A549 (cell line): ENCODE measurements at regions of chr1 and their contacts with region 1.

Region 1: DNA sequence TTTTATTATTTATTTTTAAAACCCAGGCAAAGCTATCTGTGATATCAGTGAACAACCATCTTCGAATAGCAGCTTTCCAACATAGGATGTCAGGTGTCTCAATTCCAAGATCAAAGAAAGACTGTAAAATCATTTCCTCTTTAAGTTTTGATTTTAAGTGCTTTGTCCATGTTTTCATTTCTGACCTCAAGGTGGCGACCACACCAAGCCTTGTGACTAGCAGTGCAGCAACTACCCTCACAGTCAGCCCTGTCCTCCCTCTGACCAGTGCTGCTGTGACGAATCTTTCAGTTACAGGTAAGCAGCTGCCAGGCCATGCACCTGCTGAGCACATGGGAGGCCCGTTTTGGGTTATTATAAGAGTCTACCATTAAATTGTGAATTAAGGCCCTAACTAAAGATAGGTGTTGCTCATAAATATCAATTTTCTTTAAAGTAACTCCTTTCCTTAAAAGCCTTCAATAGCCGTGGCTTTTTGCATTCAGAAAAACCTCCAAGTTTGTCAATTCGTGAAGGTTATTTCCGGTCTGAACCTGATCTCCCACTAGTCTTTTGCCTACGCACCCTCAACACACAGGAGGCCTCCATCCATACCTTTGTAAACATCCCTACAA is 117.0 kb downstream of the CD247 start:
- DNase-seq: peak; percentile 51 to 74
- ATAC-seq: peak; percentile 96 to 98
- H3K4me3 ChIP-seq: no peak overlapping the region
- H3K27ac ChIP-seq: no peak overlapping the region
- H3K4me1 ChIP-seq: peaks cover 6% of the 10 kb centered on the region; the same call in 1 of the 3 replicates
- CTCF ChIP-seq: peak; percentile 81
- EP300 ChIP-seq: no peak
- POLR2A ChIP-seq: no peak
- RAD21 ChIP-seq: peak; percentile 67 to 75

Region 2: DNA sequence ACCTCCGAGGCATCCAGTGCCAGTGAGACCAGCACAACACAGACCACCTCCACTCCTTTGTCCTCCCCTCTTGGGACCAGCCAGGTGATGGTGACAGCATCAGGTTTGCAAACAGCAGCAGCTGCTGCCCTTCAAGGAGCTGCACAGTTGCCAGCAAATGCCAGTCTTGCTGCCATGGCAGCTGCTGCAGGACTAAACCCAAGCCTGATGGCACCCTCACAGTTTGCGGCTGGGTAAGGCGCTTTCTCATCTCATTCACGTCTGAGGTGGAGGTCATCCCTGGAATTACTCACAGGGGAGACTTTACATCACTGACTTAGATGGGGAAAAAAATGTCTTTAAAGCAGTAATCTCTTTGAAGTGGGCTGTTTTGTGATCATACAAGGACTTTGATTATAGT is 10.7 kb after region 1 on chr1:
- CTCF ChIA-PET with region 1: interaction called, 25 read pairs
- POLR2A ChIA-PET with region 1: no interaction called
- DNase-seq: no peak
- ATAC-seq: no peak
- H3K4me3 ChIP-seq: no peak overlapping the region
- H3K27ac ChIP-seq: no peak overlapping the region
- H3K4me1 ChIP-seq: no peaks in the 10 kb centered on the region
- CTCF ChIP-seq: no peak
- EP300 ChIP-seq: no peak
- POLR2A ChIP-seq: no peak
- RAD21 ChIP-seq: no peak

Region 3: DNA sequence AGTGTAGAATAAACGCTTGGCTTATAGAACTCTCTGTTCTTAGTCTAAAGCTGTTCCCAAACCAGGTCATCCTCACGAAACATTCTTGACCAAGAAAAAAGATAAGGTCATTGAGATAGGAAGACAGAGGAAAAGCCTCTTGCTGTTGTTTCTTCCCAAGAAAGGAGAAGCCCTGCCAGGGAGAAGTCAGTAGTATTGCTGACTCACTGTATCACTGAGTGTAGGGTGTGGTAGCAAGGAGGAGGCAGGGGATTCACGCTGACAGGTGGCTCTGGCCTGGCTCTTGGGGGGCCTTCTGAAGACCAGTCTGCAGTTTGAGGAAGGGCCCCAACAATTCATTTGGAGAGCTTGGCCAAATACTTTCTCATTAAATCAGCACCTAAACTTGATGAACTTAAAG is 19.1 kb after region 1 on chr1:
- CTCF ChIA-PET with region 1: interaction called, 13 read pairs
- POLR2A ChIA-PET with region 1: no interaction called
- DNase-seq: peak in 1 of 2 experiments; percentile 43
- ATAC-seq: peak; percentile 54 to 60; a peak in 4 of 6 replicates
- H3K4me3 ChIP-seq: no peak overlapping the region
- H3K27ac ChIP-seq: peak overlapping the region in 1 of 2 experiments; percentile 69; a peak in 3 of 6 replicates
- H3K4me1 ChIP-seq: peaks cover 7% of the 10 kb centered on the region; the same call in 2 of the 3 replicates
- CTCF ChIP-seq: no peak
- EP300 ChIP-seq: no peak
- POLR2A ChIP-seq: no peak
- RAD21 ChIP-seq: no peak